Endothelial cell of umbilical vein (primary cell): ENCODE measurements at regions of chr11 and their contacts with region 1.

Region 1: GRCh38 chr11:74449369-74449931 is 17.9 kb downstream of the KCNE3 start:
- DNase-seq: peak; percentile 86
- H3K4me3 ChIP-seq: peak overlapping the region in 1 of 3 experiments; percentile 40
- H3K27ac ChIP-seq: no peak overlapping the region
- H3K4me1 ChIP-seq: peaks cover 11% of the 10 kb centered on the region
- H3K27me3 ChIP-seq: no peaks in the 10 kb centered on the region
- CTCF ChIP-seq: peak; percentile 65 to 71
- POLR2A ChIP-seq: no peak

Region 2: DNA sequence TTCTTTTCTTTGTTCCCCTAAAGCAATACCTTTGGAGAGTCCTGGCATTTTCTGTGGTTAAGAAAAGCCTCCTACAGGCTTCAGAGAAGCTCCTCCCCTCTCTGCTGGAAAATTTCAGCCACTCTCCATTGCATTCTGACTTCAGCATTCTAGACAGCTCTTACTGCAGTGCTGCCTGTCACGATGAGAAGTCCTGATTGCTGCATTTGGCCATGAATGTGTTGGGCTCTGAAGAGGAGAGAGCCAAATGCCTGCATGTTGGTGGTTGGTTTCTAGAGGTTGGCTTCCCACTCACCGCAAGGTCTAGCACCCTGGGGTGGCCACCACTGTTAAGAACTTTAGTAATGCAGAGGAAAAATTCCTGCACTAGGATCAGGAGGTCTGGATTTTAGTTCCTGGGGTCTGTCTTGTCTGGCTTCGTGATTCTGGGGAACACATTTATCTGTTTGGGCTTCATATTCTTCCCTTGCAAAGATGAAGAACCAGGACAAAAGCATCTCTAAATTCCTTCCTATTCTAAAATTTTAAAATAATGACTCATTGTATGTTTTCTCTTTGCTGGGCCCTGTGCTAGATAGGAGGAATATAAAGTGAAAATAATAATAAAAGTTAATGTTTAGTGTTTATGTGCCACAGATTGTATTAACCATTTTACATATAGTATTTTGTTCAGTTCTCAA is 610.9 kb before region 1 on chr11:
- CTCF ChIA-PET with region 1: no interaction called
- POLR2A ChIA-PET with region 1: no interaction called
- dilution Hi-C with region 1: no loop called
- intact Hi-C with region 1: no loop called
- DNase-seq: no peak
- H3K4me3 ChIP-seq: no peak overlapping the region
- H3K27ac ChIP-seq: no peak overlapping the region
- H3K4me1 ChIP-seq: no peaks in the 10 kb centered on the region
- H3K27me3 ChIP-seq: no peaks in the 10 kb centered on the region
- CTCF ChIP-seq: no peak
- POLR2A ChIP-seq: no peak

Region 3: GRCh38 chr11:74135127-74135840 is 314.2 kb before region 1 on chr11:
- CTCF ChIA-PET with region 1: no interaction called
- POLR2A ChIA-PET with region 1: no interaction called
- dilution Hi-C with region 1: no loop called
- intact Hi-C with region 1: no loop called
- DNase-seq: no peak
- H3K4me3 ChIP-seq: no peak overlapping the region
- H3K27ac ChIP-seq: no peak overlapping the region
- H3K4me1 ChIP-seq: peaks cover 17% of the 10 kb centered on the region
- H3K27me3 ChIP-seq: no peaks in the 10 kb centered on the region
- CTCF ChIP-seq: no peak
- POLR2A ChIP-seq: no peak

Region 4: GRCh38 chr11:74248469-74248868 is 201.0 kb before region 1 on chr11:
- CTCF ChIA-PET with region 1: interaction called, 440 read pairs
- POLR2A ChIA-PET with region 1: no interaction called
- dilution Hi-C with region 1: no loop called
- intact Hi-C with region 1: no loop called
- DNase-seq: no peak
- H3K4me3 ChIP-seq: no peak overlapping the region
- H3K27ac ChIP-seq: no peak overlapping the region
- H3K4me1 ChIP-seq: no peaks in the 10 kb centered on the region
- H3K27me3 ChIP-seq: no peaks in the 10 kb centered on the region
- CTCF ChIP-seq: no peak
- POLR2A ChIP-seq: no peak

Region 5: GRCh38 chr11:74380746-74381430 is 68.6 kb before region 1 on chr11:
- CTCF ChIA-PET with region 1: interaction called, 11 read pairs
- POLR2A ChIA-PET with region 1: no interaction called
- dilution Hi-C with region 1: no loop called
- intact Hi-C with region 1: no loop called
- DNase-seq: no peak
- H3K4me3 ChIP-seq: no peak overlapping the region
- H3K27ac ChIP-seq: no peak overlapping the region
- H3K4me1 ChIP-seq: no peaks in the 10 kb centered on the region
- H3K27me3 ChIP-seq: no peaks in the 10 kb centered on the region
- CTCF ChIP-seq: no peak
- POLR2A ChIP-seq: no peak

Region 6: GRCh38 chr11:74418509-74418895 is 30.9 kb before region 1 on chr11:
- CTCF ChIA-PET with region 1: interaction called, 8 read pairs
- POLR2A ChIA-PET with region 1: no interaction called
- dilution Hi-C with region 1: no loop called
- intact Hi-C with region 1: loop called (anchors 2 kb)
- DNase-seq: peak; percentile 95
- H3K4me3 ChIP-seq: peak overlapping the region in 1 of 3 experiments; percentile 13
- H3K27ac ChIP-seq: peak overlapping the region; percentile 96
- H3K4me1 ChIP-seq: peaks cover 24% of the 10 kb centered on the region
- H3K27me3 ChIP-seq: no peaks in the 10 kb centered on the region
- CTCF ChIP-seq: no peak
- POLR2A ChIP-seq: no peak

Region 7: GRCh38 chr11:74473382-74474173 is 24.1 kb after region 1 on chr11:
- CTCF ChIA-PET with region 1: interaction called, 13 read pairs
- POLR2A ChIA-PET with region 1: no interaction called
- dilution Hi-C with region 1: no loop called
- intact Hi-C with region 1: no loop called
- DNase-seq: no peak
- H3K4me3 ChIP-seq: no peak overlapping the region
- H3K27ac ChIP-seq: no peak overlapping the region
- H3K4me1 ChIP-seq: peaks cover 3% of the 10 kb centered on the region
- H3K27me3 ChIP-seq: peaks cover 0 to 6% of the 10 kb centered on the region in 2 experiments
- CTCF ChIP-seq: no peak
- POLR2A ChIP-seq: no peak

Region 8: DNA sequence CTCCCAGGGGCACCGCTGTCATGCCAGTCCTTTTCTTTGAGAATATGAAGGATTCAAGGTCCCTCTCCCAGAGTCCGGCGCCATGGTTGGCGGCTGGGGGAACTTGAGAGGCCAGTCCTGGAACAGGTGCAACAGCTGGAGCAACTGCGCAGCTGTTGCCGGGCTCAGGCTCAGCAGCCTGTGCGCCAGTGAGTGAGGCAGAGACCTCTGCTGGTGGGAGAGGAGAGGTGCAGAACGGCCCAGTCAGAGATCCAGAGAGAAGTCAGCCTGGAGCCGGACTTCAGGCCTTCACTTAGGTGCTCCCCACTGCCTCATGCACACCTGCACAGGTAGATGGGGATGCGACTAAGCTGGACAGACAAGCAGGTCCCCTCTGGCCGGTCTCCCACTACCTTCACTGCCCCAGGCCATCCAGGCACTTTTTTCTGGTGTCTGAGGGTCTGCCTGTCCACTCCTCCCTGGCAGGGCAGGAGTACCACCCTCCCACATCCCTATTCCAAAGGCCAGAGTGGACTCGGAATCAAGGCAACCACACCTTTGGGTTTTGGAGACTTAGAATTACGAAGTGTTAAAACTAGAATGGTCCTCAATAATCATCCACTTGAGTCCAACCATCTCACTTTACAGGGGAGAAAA is 277.2 kb after region 1 on chr11:
- CTCF ChIA-PET with region 1: interaction called, 21 read pairs
- POLR2A ChIA-PET with region 1: no interaction called
- dilution Hi-C with region 1: no loop called
- intact Hi-C with region 1: loop called (anchors 10 kb)
- DNase-seq: peak; percentile 60
- H3K4me3 ChIP-seq: no peak overlapping the region
- H3K27ac ChIP-seq: no peak overlapping the region
- H3K4me1 ChIP-seq: no peaks in the 10 kb centered on the region
- H3K27me3 ChIP-seq: peaks cover 61 to 66% of the 10 kb centered on the region in 2 experiments
- CTCF ChIP-seq: peak; percentile 80 to 97
- POLR2A ChIP-seq: no peak